CD4-positive, alpha-beta memory T cell (primary cell): ENCODE measurements at regions of chr5 and their contacts with region 1.

Region 1: GRCh38 chr5:172065501-172065990 is 59.1 kb upstream of the FBXW11 start:
- DNase-seq: no peak
- H3K4me3 ChIP-seq: no peak overlapping the region
- H3K4me3 Mint-ChIP-seq: peak overlapping the region in 5 of 8 donors; percentile 4 to 86 (median 80)
- H3K27ac ChIP-seq: peak overlapping the region; percentile 62
- H3K27ac Mint-ChIP-seq: peak overlapping the region in 5 of 7 donors; percentile 29 to 98 (median 95)
- H3K4me1 ChIP-seq: peaks cover 68% of the 10 kb centered on the region
- H3K4me1 Mint-ChIP-seq: peaks cover 46 to 79% (median 60%) of the 10 kb centered on the region in 4 donors
- H3K27me3 ChIP-seq: no peaks in the 10 kb centered on the region
- H3K27me3 Mint-ChIP-seq: no peaks in the 10 kb centered on the region

Region 2: GRCh38 chr5:172052450-172053236 is 12.9 kb before region 1 on chr5:
- CTCF ChIA-PET with region 1: interaction called, 31 read pairs
- POLR2A ChIA-PET with region 1: interaction called, 12 read pairs
- intact Hi-C with region 1: loop called (anchors 1 kb)
- DNase-seq: no peak
- H3K4me3 ChIP-seq: no peak overlapping the region
- H3K4me3 Mint-ChIP-seq: no peak overlapping the region
- H3K27ac ChIP-seq: no peak overlapping the region
- H3K27ac Mint-ChIP-seq: peak overlapping the region in 1 of 7 donors; percentile 23
- H3K4me1 ChIP-seq: no peaks in the 10 kb centered on the region
- H3K4me1 Mint-ChIP-seq: peaks cover 5 to 18% (median 7%) of the 10 kb centered on the region in 4 donors
- H3K27me3 ChIP-seq: no peaks in the 10 kb centered on the region
- H3K27me3 Mint-ChIP-seq: no peaks in the 10 kb centered on the region

Region 3: DNA sequence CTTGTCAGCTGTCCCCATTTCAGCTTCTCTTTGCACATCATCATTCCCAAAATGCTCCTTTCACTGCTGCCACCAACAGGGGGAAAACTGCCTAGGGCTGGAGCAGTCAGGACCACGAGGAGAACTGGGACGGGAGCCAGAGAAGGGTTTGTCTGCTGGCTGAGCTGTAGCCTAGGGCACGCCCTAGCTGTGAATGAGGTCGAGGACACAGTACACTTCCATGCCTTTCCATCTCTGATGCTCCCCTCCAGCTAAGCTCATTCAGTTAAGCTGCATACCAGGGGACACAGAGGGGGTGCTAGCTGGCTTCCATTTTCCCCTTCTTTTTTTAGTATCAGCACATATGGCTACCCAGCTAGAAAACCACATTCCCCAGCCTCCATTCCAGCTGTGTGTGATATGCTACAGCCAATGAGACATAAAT is 57.7 kb after region 1 on chr5:
- CTCF ChIA-PET with region 1: no interaction called
- POLR2A ChIA-PET with region 1: no interaction called
- intact Hi-C with region 1: no loop called
- DNase-seq: no peak
- H3K4me3 ChIP-seq: no peak overlapping the region
- H3K4me3 Mint-ChIP-seq: no peak overlapping the region
- H3K27ac ChIP-seq: no peak overlapping the region
- H3K27ac Mint-ChIP-seq: peak overlapping the region; percentile 42 to 93 (median 49)
- H3K4me1 ChIP-seq: peaks cover 48% of the 10 kb centered on the region
- H3K4me1 Mint-ChIP-seq: peaks cover 26 to 78% (median 41%) of the 10 kb centered on the region in 4 donors
- H3K27me3 ChIP-seq: no peaks in the 10 kb centered on the region
- H3K27me3 Mint-ChIP-seq: no peaks in the 10 kb centered on the region

Region 4: DNA sequence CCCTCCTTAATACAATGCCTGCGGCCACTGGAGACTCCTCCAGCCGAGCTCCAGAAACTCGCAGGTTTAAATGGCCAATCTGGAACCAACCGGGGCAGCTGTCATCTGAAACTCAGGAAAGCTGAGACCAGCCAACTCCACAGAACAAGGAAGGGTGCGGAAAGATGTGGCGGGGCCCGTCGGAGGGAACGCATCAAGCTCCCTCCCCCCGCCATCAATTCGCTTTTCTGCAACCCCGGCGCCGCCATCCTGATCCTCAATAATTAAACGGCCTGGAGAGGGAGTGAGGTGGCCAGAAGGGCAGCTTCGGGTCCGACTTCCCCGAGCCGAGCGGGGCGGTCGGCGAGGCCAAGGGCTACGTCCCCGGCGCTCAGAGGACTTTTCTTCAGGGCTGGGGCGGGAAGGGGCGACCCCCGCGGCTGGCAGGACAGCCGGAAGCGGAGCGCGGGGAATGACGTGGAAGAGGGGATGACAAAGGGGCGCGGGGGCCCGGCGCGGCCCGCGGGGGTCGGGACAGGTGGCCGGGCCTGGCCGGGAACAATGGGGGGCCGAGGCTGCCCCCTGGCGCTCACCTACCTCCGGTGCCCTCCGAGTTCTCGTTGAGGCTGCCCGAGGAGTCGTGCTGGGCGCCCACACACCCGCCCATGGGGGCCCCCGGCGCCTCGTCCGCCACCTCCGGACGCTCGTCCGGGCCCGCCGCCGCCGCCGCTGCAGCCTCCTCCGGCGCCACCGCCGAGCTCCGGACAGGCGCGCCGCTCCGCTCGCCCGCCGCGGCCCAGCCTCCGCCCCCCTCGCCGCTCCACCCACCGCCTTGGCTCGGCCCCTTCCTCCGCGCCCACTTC is 217.7 kb after region 1 on chr5 and contains the start of gene UBTD2:
- CTCF ChIA-PET with region 1: no interaction called
- POLR2A ChIA-PET with region 1: interaction called, 3 read pairs
- intact Hi-C with region 1: loop called (anchors 5 kb)
- DNase-seq: peak; percentile 72 to 82 (median 76)
- H3K4me3 ChIP-seq: peak within 1 kb of the TSS; percentile 47 to 71
- H3K4me3 Mint-ChIP-seq: peak within 1 kb of the TSS; percentile 89 to 93 (median 91)
- H3K27ac ChIP-seq: peak within 1 kb of the TSS; percentile 62
- H3K27ac Mint-ChIP-seq: peak within 1 kb of the TSS; percentile 80 to 96 (median 87)
- H3K4me1 ChIP-seq: peaks cover 26% of the 10 kb centered on the region
- H3K4me1 Mint-ChIP-seq: peaks cover 14 to 34% (median 21%) of the 10 kb centered on the region in 4 donors
- H3K27me3 ChIP-seq: no peaks in the 10 kb centered on the region
- H3K27me3 Mint-ChIP-seq: no peaks in the 10 kb centered on the region
- total RNA-seq, gene UBTD2: 6.3 TPM